Natural killer cell (primary cell): ENCODE measurements at regions of chr4 and their contacts with region 1.

Region 1: GRCh38 chr4:88823058-88823919 is 125.7 kb upstream of the NAP1L5 start:
- DNase-seq: peak; percentile 61 to 92
- ATAC-seq: peak; percentile 91 to 97 (median 95)
- H3K4me3 ChIP-seq: peak overlapping the region; percentile 47
- H3K4me3 Mint-ChIP-seq: peak overlapping the region; percentile 91
- H3K27ac ChIP-seq: peak overlapping the region; percentile 82
- H3K27ac Mint-ChIP-seq: peak overlapping the region; percentile 92 to 97
- H3K4me1 ChIP-seq: peaks cover 6% of the 10 kb centered on the region
- H3K4me1 Mint-ChIP-seq: peaks cover 23 to 26% of the 10 kb centered on the region in 2 donors
- H3K27me3 ChIP-seq: no peaks in the 10 kb centered on the region
- H3K27me3 Mint-ChIP-seq: no peaks in the 10 kb centered on the region
- CTCF ChIP-seq: no peak

Region 2: DNA sequence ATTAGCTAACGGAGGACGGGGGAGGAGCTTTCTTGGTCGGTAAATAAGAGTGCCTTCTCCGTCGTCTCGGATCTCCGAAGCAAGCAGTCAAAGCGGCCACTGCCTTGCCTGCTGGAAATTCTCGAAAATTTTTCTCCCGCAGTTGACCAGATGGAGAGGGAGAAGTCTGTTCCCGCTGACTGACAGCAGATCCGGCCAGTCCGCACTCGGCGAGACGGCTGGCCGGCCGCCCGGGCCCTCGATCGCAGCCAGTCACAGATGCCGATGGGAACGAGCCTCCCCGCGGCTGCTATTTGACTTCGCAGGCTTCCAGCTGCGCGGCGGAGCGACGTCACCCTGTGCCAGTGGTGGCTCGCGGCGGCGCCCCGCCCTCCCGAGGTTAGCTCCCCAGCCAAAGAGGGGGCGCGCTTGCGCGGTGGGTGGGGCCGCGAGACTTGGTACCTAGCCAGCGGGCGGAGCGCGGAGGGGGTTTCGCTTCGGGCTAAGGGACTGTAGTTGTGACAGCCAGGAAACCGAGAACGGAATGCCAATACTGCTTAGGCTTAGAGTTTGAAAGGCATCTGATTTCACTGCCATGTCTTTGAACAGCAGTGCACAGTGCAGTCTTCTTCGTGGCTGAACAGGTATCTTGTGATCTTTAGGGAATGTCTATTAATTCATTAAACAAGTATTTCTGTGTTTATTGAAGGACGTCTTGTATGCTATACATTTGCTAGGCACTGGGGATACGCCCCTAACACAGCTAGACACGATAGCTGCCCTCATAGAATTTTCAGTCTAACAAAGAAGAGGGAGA is 538.7 kb before region 1 on chr4 and contains the start of gene PPM1K:
- intact Hi-C with region 1: loop called (anchors 1 kb)
- DNase-seq: peak; percentile 99
- ATAC-seq: peak; percentile 80 to 95 (median 86)
- H3K4me3 ChIP-seq: peak within 1 kb of the TSS; percentile 85
- H3K4me3 Mint-ChIP-seq: peak within 1 kb of the TSS; percentile 99
- H3K27ac ChIP-seq: peak within 1 kb of the TSS; percentile 96
- H3K27ac Mint-ChIP-seq: peak within 1 kb of the TSS; percentile 92 to 100
- H3K4me1 ChIP-seq: peaks cover 26% of the 10 kb centered on the region
- H3K4me1 Mint-ChIP-seq: peaks cover 46 to 52% of the 10 kb centered on the region in 2 donors
- H3K27me3 ChIP-seq: no peaks in the 10 kb centered on the region
- H3K27me3 Mint-ChIP-seq: no peaks in the 10 kb centered on the region
- CTCF ChIP-seq: no peak
- total RNA-seq, gene PPM1K: 68.0 to 76.8 (median 74.3) TPM

Region 3: DNA sequence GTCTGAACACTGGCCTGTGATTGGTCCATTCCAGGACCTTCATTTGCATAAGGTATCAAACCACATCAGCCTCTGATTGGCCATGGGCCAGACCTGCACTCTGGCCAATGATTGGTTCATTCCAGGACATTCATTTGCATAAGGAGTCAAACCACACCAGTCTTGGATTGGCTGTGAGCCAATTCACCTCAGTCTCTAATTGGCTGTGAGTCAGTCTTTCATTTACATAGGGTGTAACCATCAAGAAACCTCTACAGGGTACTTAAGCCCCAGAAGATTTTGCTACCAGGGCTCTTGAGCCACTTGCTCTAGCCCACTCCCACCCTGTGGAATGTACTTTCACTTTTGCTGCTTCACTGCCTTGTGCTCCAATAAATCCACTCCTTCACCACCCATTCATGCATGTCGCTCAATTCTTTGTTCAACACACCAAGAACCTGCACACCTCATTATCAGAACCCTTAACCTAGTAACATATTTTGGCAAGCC is 380.5 kb before region 1 on chr4:
- intact Hi-C with region 1: no loop called
- DNase-seq: no peak
- ATAC-seq: no peak
- H3K4me3 ChIP-seq: no peak overlapping the region
- H3K4me3 Mint-ChIP-seq: no peak overlapping the region
- H3K27ac ChIP-seq: no peak overlapping the region
- H3K27ac Mint-ChIP-seq: peak overlapping the region in 1 of 2 donors; percentile 9
- H3K4me1 ChIP-seq: no peaks in the 10 kb centered on the region
- H3K4me1 Mint-ChIP-seq: peaks cover 0 to 6% of the 10 kb centered on the region in 2 donors
- H3K27me3 ChIP-seq: no peaks in the 10 kb centered on the region
- H3K27me3 Mint-ChIP-seq: no peaks in the 10 kb centered on the region
- CTCF ChIP-seq: no peak

Region 4: DNA sequence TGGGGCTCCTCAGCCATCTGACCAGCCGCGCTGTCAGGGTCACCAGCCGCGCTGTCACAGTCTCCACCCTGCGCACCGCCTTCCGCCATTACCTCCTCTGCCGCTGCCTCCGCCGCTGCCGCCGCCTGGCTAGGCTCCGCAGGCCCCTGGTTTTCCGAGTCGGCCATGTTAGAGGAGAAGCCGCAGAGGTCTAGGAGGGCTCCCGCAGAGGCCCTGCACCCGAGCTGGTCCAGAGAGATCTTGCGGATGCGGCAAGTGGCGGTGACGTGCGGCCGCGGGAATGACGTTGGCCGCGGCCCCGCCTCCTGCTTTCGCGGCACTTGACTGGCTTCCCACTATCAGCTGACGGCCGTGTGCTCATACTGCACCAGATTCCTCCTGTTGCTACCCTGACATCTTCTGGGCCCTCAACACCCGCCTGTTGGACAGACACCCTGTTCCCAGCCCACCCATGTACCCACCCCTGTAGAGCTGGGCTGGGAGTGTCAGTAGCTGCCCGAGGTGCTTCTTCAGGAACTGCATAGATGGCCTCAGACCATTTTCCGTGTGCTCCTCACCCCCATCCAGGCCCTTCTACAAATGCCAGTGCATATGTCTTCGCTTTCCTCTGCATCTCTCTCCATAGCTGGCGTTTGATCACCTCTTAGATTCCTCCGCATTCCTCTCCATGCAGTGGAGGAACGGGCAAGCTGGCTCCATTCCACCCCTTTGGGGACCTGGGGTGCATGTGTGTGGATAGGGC is 125.5 kb before region 1 on chr4 and contains the start of gene NAP1L5:
- intact Hi-C with region 1: loop called (anchors 1 kb)
- DNase-seq: peak; percentile 75 to 90
- ATAC-seq: peak; percentile 90 to 94 (median 91)
- H3K4me3 ChIP-seq: peak within 1 kb of the TSS; percentile 90
- H3K4me3 Mint-ChIP-seq: peak within 1 kb of the TSS; percentile 95
- H3K27ac ChIP-seq: peak within 1 kb of the TSS; percentile 78
- H3K27ac Mint-ChIP-seq: peak within 1 kb of the TSS; percentile 86 to 96
- H3K4me1 ChIP-seq: peaks cover 4% of the 10 kb centered on the region
- H3K4me1 Mint-ChIP-seq: peaks cover 12 to 20% of the 10 kb centered on the region in 2 donors
- H3K27me3 ChIP-seq: no peaks in the 10 kb centered on the region
- H3K27me3 Mint-ChIP-seq: no peaks in the 10 kb centered on the region
- CTCF ChIP-seq: no peak
- total RNA-seq, gene NAP1L5: 11.4 to 16.1 (median 12.7) TPM

Region 5: DNA sequence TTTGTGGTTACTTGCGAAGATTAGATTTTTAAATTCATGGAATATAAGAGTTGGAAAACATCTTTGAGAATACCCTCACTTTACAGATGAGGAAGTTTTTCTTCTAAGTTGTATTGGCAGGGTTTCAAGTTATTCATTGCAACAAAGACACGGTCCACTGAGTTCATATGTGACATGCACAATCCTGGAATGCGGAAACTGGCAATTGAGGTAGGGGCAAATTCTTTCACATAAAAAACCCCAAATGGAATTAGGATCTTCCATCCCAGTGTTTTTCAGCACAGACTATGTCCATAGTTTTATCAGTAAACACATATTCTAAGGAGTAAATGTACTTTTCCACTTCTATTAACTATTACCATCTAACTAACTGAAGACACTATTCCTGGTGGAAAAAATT is 43.9 kb before region 1 on chr4:
- intact Hi-C with region 1: no loop called
- DNase-seq: no peak
- ATAC-seq: no peak
- H3K4me3 ChIP-seq: no peak overlapping the region
- H3K4me3 Mint-ChIP-seq: no peak overlapping the region
- H3K27ac ChIP-seq: no peak overlapping the region
- H3K27ac Mint-ChIP-seq: no peak overlapping the region
- H3K4me1 ChIP-seq: no peaks in the 10 kb centered on the region
- H3K4me1 Mint-ChIP-seq: no peaks in the 10 kb centered on the region
- H3K27me3 ChIP-seq: no peaks in the 10 kb centered on the region
- H3K27me3 Mint-ChIP-seq: no peaks in the 10 kb centered on the region
- CTCF ChIP-seq: no peak

Region 6: GRCh38 chr4:89110986-89111832 is 287.9 kb after region 1 on chr4 and contains the start of gene TIGD2:
- intact Hi-C with region 1: loop called (anchors 1 kb)
- DNase-seq: peak; percentile 86 to 95
- ATAC-seq: peak; percentile 92 to 98 (median 92)
- H3K4me3 ChIP-seq: peak within 1 kb of the TSS; percentile 62
- H3K4me3 Mint-ChIP-seq: peak within 1 kb of the TSS; percentile 96
- H3K27ac ChIP-seq: peak within 1 kb of the TSS; percentile 68
- H3K27ac Mint-ChIP-seq: peak within 1 kb of the TSS; percentile 89 to 90
- H3K4me1 ChIP-seq: peaks cover 14% of the 10 kb centered on the region
- H3K4me1 Mint-ChIP-seq: peaks cover 27 to 32% of the 10 kb centered on the region in 2 donors
- H3K27me3 ChIP-seq: no peaks in the 10 kb centered on the region
- H3K27me3 Mint-ChIP-seq: peaks cover 11 to 18% of the 10 kb centered on the region in 2 donors
- CTCF ChIP-seq: peak; percentile 94
- total RNA-seq, gene TIGD2: 3.2 to 7.6 (median 5.1) TPM